Heart left ventricle (tissue), 16 donors: ENCODE measurements at regions of chr20 and their contacts with region 1.

Region 1: GRCh38 chr20:44609511-44610312 is 27.3 kb downstream of the PKIG start:
- DNase-seq: peak; percentile 88 to 93 (median 89)
- ATAC-seq: peak; percentile 85 to 92 (median 91)
- H3K4me3 ChIP-seq: peak overlapping the region in 9 of 12 donors; percentile 11 to 41 (median 32)
- H3K27ac ChIP-seq: peak overlapping the region; percentile 45 to 91 (median 84)
- H3K4me1 ChIP-seq: peaks cover 8 to 70% (median 40%) of the 10 kb centered on the region in 12 donors
- H3K27me3 ChIP-seq: no peaks in the 10 kb centered on the region
- CTCF ChIP-seq: peak; percentile 92 to 100 (median 98)
- POLR2A ChIP-seq: no peak

Region 2: GRCh38 chr20:44210422-44211176 is 399.1 kb before region 1 on chr20 and contains the start of gene OSER1:
- intact Hi-C with region 1: loop called in 4 of 10 experiments (anchors 5 to 10 kb)
- DNase-seq: peak; percentile 97 to 99 (median 97)
- ATAC-seq: peak; percentile 90 to 95 (median 93)
- H3K4me3 ChIP-seq: peak within 1 kb of the TSS; percentile 63 to 98 (median 84)
- H3K27ac ChIP-seq: peak within 1 kb of the TSS; percentile 85 to 97 (median 92)
- H3K4me1 ChIP-seq: peaks cover 7 to 56% (median 42%) of the 10 kb centered on the region in 12 donors
- H3K27me3 ChIP-seq: no peaks in the 10 kb centered on the region
- CTCF ChIP-seq: no peak
- POLR2A ChIP-seq: peak; percentile 77 to 89
- total RNA-seq, gene OSER1: 20.6 to 39.0 (median 34.1) TPM

Region 3: GRCh38 chr20:44310664-44311639 is 298.8 kb before region 1 on chr20 and contains the start of gene FITM2:
- intact Hi-C with region 1: loop called in 2 of 10 experiments (anchors 10 kb)
- DNase-seq: peak; percentile 98 to 100 (median 99)
- ATAC-seq: peak; percentile 72 to 90 (median 88)
- H3K4me3 ChIP-seq: peak within 1 kb of the TSS; percentile 62 to 98 (median 81)
- H3K27ac ChIP-seq: peak within 1 kb of the TSS; percentile 66 to 95 (median 88)
- H3K4me1 ChIP-seq: peaks cover 0 to 47% (median 17%) of the 10 kb centered on the region in 12 donors
- H3K27me3 ChIP-seq: no peaks in the 10 kb centered on the region
- CTCF ChIP-seq: peak; percentile 92 to 98 (median 96)
- POLR2A ChIP-seq: peak in 1 of 2 donors; percentile 80
- total RNA-seq, gene FITM2: 71.7 to 165 (median 125) TPM

Region 4: DNA sequence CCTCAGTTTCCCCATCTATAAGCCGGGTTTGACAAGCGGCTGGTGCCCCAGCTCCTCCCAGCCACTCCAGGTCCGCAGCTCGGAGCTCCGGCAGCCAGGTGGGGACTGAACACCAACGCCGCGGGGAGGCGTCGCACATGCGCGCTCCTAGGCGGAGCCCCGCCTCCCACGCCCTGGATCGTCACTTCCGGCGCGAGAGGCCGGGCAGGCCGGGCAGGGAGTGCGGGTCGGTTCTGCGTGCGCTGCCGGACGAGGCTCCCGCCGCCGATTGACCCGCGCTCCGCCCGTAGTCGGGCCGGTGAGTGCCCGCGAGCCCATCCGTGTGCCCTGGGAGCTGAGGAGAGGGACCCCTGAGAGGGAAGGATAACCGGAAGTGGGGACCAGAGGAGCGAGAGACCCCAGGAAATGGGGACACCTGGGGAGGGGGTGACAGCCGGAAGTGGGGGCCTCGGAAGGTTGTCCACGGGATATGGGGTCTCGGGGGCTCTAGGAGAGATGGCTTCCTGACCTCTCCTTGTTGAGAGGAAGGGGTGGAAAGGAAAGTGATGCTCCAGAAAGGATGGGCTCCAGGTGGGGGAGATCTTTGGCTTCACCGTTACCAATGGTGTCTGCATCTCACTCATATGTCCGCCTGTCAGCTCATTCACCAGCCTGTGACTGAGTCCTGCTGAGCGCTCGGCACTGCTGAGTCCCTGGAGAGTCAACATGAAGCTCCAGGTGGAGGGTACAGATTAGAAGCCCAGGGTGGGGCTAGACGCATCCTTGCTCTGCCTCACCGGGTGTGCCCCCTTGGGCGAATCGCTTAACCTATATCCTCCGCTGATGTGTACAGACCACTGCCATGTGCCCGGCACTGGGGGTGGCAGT is 133.8 kb before region 1 on chr20 and contains the start of gene TTPAL:
- intact Hi-C with region 1: loop called in 5 of 10 experiments (anchors 5 to 10 kb)
- DNase-seq: peak; percentile 88 to 94 (median 91)
- ATAC-seq: peak; percentile 93 to 98 (median 98)
- H3K4me3 ChIP-seq: peak within 1 kb of the TSS; percentile 60 to 90 (median 76)
- H3K27ac ChIP-seq: peak within 1 kb of the TSS; percentile 58 to 97 (median 90)
- H3K4me1 ChIP-seq: peaks cover 0 to 20% (median 11%) of the 10 kb centered on the region in 12 donors
- H3K27me3 ChIP-seq: no peaks in the 10 kb centered on the region
- CTCF ChIP-seq: peak in 10 of 12 donors; percentile 17 to 62 (median 40)
- POLR2A ChIP-seq: peak; percentile 88 to 98
- total RNA-seq, gene TTPAL: 2.8 to 6.0 (median 4.2) TPM

Region 5: DNA sequence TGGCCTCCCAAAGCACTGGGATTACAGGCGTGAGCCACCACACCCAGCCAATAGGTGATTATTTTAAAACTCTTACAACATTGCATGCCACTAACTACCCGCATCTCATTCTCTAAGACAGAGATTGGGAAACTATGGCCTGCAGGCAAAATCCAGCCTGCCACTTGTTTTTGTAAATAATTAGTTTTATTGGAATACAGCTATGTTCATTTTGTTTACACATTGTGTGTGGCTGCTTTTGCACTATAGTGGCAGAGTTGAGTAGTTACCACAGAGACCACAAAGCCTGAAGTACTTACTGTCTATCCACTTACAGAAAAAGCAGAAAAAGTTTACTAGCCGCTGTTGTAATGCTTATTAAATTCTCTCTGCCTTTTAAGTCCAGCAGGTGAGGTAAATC is 43.7 kb before region 1 on chr20:
- intact Hi-C with region 1: no loop called
- DNase-seq: no peak
- ATAC-seq: no peak
- H3K4me3 ChIP-seq: no peak overlapping the region
- H3K27ac ChIP-seq: peak overlapping the region in 1 of 12 donors; percentile 73
- H3K4me1 ChIP-seq: peaks cover 0 to 33% (median 0%) of the 10 kb centered on the region in 12 donors
- H3K27me3 ChIP-seq: no peaks in the 10 kb centered on the region
- CTCF ChIP-seq: no peak
- POLR2A ChIP-seq: no peak

Region 6: GRCh38 chr20:44576297-44576696 is 33.4 kb before region 1 on chr20:
- intact Hi-C with region 1: loop called in 9 of 10 experiments (anchors 1 to 5 kb)
- DNase-seq: peak in 1 of 5 donors; percentile 50
- ATAC-seq: peak in 2 of 4 donors; percentile 16 to 27
- H3K4me3 ChIP-seq: no peak overlapping the region
- H3K27ac ChIP-seq: peak overlapping the region; percentile 6 to 85 (median 62)
- H3K4me1 ChIP-seq: peaks cover 3 to 84% (median 62%) of the 10 kb centered on the region in 12 donors
- H3K27me3 ChIP-seq: no peaks in the 10 kb centered on the region
- CTCF ChIP-seq: peak in 11 of 12 donors; percentile 27 to 68 (median 50)
- POLR2A ChIP-seq: no peak

Region 7: DNA sequence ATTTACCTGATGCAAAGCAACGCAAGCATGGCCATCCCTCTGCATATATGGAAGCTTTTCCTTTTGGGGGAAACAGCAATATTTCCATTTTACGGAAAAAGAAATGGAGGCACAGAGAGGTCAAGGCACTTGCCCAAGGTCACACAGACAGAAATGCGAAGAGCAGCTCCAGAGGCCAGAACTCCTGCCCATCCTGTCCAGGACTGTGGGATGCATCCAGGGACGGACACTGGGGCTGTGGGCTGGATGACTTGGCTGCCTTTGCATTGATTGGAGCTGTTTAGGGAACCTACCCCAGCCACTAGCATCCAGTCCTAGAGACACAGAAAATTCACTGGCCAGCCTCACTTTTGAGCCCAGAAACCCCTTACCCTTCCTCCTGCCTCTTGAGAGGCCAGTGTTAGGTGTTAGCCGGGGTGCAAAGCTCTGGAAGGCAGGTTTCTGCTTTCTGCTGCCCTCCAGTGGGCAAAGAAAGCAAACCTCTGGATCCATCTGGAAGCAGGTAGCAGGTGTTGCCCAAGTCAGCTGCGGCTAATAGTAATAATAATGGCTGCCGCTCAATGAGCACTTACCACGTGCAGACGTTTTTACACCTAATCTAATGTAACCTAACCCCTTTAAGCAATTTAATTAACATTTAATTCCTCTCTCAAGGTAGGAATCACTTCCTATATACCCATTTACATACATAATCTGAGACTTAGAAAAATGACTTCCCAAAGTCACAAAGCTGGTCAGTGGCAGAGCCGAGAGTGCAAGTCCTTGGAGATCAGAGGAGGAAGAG is 73.7 kb after region 1 on chr20:
- intact Hi-C with region 1: loop called in 2 of 10 experiments (anchors 1 to 10 kb)
- DNase-seq: no peak
- ATAC-seq: peak in 3 of 4 donors; percentile 50 to 70 (median 59)
- H3K4me3 ChIP-seq: no peak overlapping the region
- H3K27ac ChIP-seq: no peak overlapping the region
- H3K4me1 ChIP-seq: peaks cover 0 to 12% (median 0%) of the 10 kb centered on the region in 12 donors
- H3K27me3 ChIP-seq: no peaks in the 10 kb centered on the region
- CTCF ChIP-seq: peak in 11 of 12 donors; percentile 35 to 77 (median 57)
- POLR2A ChIP-seq: no peak